ENCODE measurements at regions of chrX and their contacts with region 1.

Region 1: GRCh38 chrX:41333744-41334259 is at the start of gene DDX3X:
- DNase-seq: peak; percentile 58 to 95 (median 81)
- ATAC-seq: peak; percentile 55
- H3K4me3 ChIP-seq: peak within 1 kb of the TSS; percentile 93 to 100
- H3K4me3 Mint-ChIP-seq: peak within 1 kb of the TSS; percentile 95
- H3K27ac ChIP-seq: peak within 1 kb of the TSS; percentile 99
- H3K27ac Mint-ChIP-seq: peak within 1 kb of the TSS; percentile 99
- H3K4me1 ChIP-seq: peaks cover 14% of the 10 kb centered on the region
- H3K4me1 Mint-ChIP-seq: peaks cover 33% of the 10 kb centered on the region
- H3K27me3 ChIP-seq: no peaks in the 10 kb centered on the region
- H3K27me3 Mint-ChIP-seq: no peaks in the 10 kb centered on the region
- CTCF ChIP-seq: peak; percentile 23
- total RNA-seq, gene DDX3X: 643 to 648 TPM

Region 2: GRCh38 chrX:41245641-41246040 is 88.2 kb before region 1 on chrX:
- CTCF ChIA-PET with region 1: no interaction called
- POLR2A ChIA-PET with region 1: no interaction called
- intact Hi-C with region 1: no loop called
- DNase-seq: no peak
- ATAC-seq: no peak
- H3K4me3 ChIP-seq: no peak overlapping the region
- H3K4me3 Mint-ChIP-seq: no peak overlapping the region
- H3K27ac ChIP-seq: no peak overlapping the region
- H3K27ac Mint-ChIP-seq: no peak overlapping the region
- H3K4me1 ChIP-seq: no peaks in the 10 kb centered on the region
- H3K4me1 Mint-ChIP-seq: no peaks in the 10 kb centered on the region
- H3K27me3 ChIP-seq: no peaks in the 10 kb centered on the region
- H3K27me3 Mint-ChIP-seq: no peaks in the 10 kb centered on the region
- CTCF ChIP-seq: no peak

Region 3: GRCh38 chrX:41265615-41266014 is 68.2 kb before region 1 on chrX:
- CTCF ChIA-PET with region 1: no interaction called
- POLR2A ChIA-PET with region 1: no interaction called
- intact Hi-C with region 1: loop called in 1 of 2 experiments (anchors 5 kb)
- DNase-seq: peak in 7 of 9 experiments; percentile 9 to 82 (median 50)
- ATAC-seq: peak; percentile 98
- H3K4me3 ChIP-seq: peak overlapping the region in 1 of 2 experiments; percentile 23
- H3K4me3 Mint-ChIP-seq: peak overlapping the region; percentile 78
- H3K27ac ChIP-seq: no peak overlapping the region
- H3K27ac Mint-ChIP-seq: no peak overlapping the region
- H3K4me1 ChIP-seq: no peaks in the 10 kb centered on the region
- H3K4me1 Mint-ChIP-seq: peaks cover 5% of the 10 kb centered on the region
- H3K27me3 ChIP-seq: no peaks in the 10 kb centered on the region
- H3K27me3 Mint-ChIP-seq: no peaks in the 10 kb centered on the region
- CTCF ChIP-seq: no peak

Region 4: DNA sequence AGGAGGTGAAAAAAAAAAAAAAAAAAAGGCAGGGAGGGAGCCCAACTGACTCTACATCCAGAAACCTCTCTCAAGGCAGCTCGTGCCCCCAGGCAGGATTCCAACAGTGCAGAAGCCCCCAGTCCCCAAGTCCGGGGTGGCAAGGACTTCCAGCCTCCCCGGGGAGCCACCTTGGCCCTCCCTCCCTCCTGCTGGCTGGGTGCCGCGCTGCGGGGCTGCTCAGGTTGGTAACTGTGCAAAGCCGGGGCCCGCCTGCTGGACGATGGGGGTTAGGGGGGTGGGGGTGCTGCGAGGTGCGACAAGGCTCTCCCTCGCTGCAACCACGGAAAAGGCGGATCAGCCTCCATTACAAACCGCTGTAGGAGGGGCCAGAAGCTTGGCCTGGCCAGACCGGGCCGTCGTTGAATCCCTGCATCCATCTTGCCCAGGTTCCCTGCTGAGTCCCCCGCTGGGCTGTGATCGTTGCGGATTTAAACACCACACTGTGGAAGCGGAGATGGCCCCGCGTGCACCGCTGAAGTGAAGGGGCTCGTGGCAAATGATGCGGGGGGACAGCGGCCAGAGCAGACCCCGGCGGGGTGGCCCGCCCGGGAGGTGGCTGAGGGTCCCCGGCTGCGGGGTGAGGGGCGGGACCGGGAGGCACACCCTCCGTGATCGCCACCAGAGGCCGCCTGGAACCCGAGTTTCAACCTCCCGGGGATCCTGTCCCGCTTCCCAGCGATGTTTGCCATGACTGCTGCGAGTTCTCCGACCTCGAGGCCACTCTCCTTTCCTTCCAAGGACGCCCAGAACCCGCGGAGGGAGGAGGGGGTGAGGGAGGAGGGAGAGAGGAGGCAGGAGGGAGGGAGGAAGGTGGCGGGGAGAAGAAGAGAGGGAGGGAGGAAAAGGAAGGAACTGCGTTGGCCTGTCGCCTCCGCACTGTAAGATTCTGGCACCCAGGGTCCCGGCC is 57.9 kb before region 1 on chrX:
- CTCF ChIA-PET with region 1: interaction called, 3 read pairs
- POLR2A ChIA-PET with region 1: no interaction called
- intact Hi-C with region 1: loop called in 1 of 2 experiments (anchors 1 kb)
- DNase-seq: peak in 8 of 9 experiments; percentile 22 to 74 (median 54)
- ATAC-seq: peak; percentile 68
- H3K4me3 ChIP-seq: peak overlapping the region; percentile 52 to 57
- H3K4me3 Mint-ChIP-seq: peak overlapping the region; percentile 80
- H3K27ac ChIP-seq: peak overlapping the region in 1 of 2 experiments; percentile 25
- H3K27ac Mint-ChIP-seq: peak overlapping the region; percentile 37
- H3K4me1 ChIP-seq: no peaks in the 10 kb centered on the region
- H3K4me1 Mint-ChIP-seq: peaks cover 7% of the 10 kb centered on the region
- H3K27me3 ChIP-seq: no peaks in the 10 kb centered on the region
- H3K27me3 Mint-ChIP-seq: no peaks in the 10 kb centered on the region
- CTCF ChIP-seq: peak; percentile 33

Region 5: GRCh38 chrX:41350976-41351569 is 17.3 kb after region 1 on chrX:
- CTCF ChIA-PET with region 1: interaction called, 3 read pairs
- POLR2A ChIA-PET with region 1: interaction called, 6 read pairs
- intact Hi-C with region 1: loop called in 1 of 2 experiments (anchors 1 kb)
- DNase-seq: peak in 1 of 9 experiments; percentile 18
- ATAC-seq: peak; percentile 16
- H3K4me3 ChIP-seq: no peak overlapping the region
- H3K4me3 Mint-ChIP-seq: no peak overlapping the region
- H3K27ac ChIP-seq: no peak overlapping the region
- H3K27ac Mint-ChIP-seq: peak overlapping the region; percentile 49
- H3K4me1 ChIP-seq: peaks cover 6% of the 10 kb centered on the region
- H3K4me1 Mint-ChIP-seq: peaks cover 20% of the 10 kb centered on the region
- H3K27me3 ChIP-seq: no peaks in the 10 kb centered on the region
- H3K27me3 Mint-ChIP-seq: no peaks in the 10 kb centered on the region
- CTCF ChIP-seq: no peak

Region 6: DNA sequence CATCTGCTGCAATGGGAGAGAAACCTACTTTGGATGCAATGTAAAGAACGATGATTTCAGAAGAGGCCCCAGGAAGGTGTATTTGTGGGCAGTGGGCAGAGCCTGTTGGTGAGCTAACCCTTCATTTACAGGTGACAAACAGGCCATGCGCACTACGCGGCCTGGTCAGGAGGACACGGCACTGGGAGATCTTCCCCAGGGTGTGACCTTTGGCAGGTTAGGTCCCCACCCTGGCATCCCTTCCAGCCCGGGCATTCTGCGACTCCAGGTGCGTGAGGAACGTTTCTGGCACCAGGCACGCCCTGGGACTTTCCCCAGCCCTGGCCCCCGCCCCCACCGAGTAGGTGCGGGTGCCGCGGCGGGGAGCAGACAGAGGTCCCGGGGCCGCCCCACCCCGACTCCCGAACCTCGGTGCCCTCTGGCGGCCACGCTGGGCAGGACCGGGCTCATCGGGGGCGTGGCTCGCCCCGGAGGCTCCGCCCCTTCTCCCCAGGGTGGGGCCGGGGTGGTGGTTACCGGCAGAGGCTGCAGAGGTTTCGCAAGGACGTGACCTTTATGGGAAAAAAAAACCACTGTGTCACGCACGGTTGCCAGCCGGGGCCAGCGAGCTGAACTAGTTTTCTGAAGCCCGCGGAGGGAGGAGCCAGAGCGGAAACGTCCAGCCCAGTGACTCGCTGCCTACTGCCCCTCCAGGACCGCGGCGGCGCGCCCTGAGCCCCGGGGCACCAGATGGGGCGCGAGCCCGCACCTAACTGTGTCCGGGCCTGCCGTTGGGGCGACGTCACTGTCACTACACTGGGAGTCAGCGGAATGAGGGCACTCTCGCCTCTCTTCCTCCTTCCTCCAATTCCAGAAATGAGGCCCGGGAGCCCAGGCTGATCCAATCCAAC is 108.4 kb after region 1 on chrX:
- CTCF ChIA-PET with region 1: no interaction called
- POLR2A ChIA-PET with region 1: no interaction called
- intact Hi-C with region 1: loop called (anchors 2 kb)
- DNase-seq: peak; percentile 73 to 91 (median 81)
- ATAC-seq: peak; percentile 97
- H3K4me3 ChIP-seq: peak overlapping the region; percentile 49 to 51
- H3K4me3 Mint-ChIP-seq: peak overlapping the region; percentile 61
- H3K27ac ChIP-seq: no peak overlapping the region
- H3K27ac Mint-ChIP-seq: peak overlapping the region; percentile 60
- H3K4me1 ChIP-seq: peaks cover 6% of the 10 kb centered on the region
- H3K4me1 Mint-ChIP-seq: peaks cover 5% of the 10 kb centered on the region
- H3K27me3 ChIP-seq: no peaks in the 10 kb centered on the region
- H3K27me3 Mint-ChIP-seq: no peaks in the 10 kb centered on the region
- CTCF ChIP-seq: peak; percentile 59

Region 7: GRCh38 chrX:42384956-42385355 is 1051.2 kb after region 1 on chrX:
- CTCF ChIA-PET with region 1: no interaction called
- POLR2A ChIA-PET with region 1: no interaction called
- intact Hi-C with region 1: no loop called
- DNase-seq: no peak
- ATAC-seq: no peak
- H3K4me3 ChIP-seq: no peak overlapping the region
- H3K4me3 Mint-ChIP-seq: no peak overlapping the region
- H3K27ac ChIP-seq: no peak overlapping the region
- H3K27ac Mint-ChIP-seq: no peak overlapping the region
- H3K4me1 ChIP-seq: no peaks in the 10 kb centered on the region
- H3K4me1 Mint-ChIP-seq: no peaks in the 10 kb centered on the region
- H3K27me3 ChIP-seq: no peaks in the 10 kb centered on the region
- H3K27me3 Mint-ChIP-seq: no peaks in the 10 kb centered on the region
- CTCF ChIP-seq: no peak

Measured in CD8-positive, alpha-beta T cell (primary cell).